CD8-positive, alpha-beta memory T cell (primary cell): ENCODE measurements at regions of chr15 and their contacts with region 1.

Region 1: GRCh38 chr15:39624806-39625205 is 43.9 kb downstream of the THBS1 start:
- DNase-seq: peak; percentile 17 to 91 (median 70)
- H3K4me3 ChIP-seq: no peak overlapping the region
- H3K4me3 Mint-ChIP-seq: peak overlapping the region; percentile 62 to 93 (median 87)
- H3K27ac ChIP-seq: peak overlapping the region; percentile 77
- H3K27ac Mint-ChIP-seq: peak overlapping the region; percentile 98 to 100 (median 100)
- H3K4me1 ChIP-seq: peaks cover 75% of the 10 kb centered on the region
- H3K4me1 Mint-ChIP-seq: peaks cover 86 to 91% (median 89%) of the 10 kb centered on the region in 3 donors
- H3K27me3 ChIP-seq: no peaks in the 10 kb centered on the region
- H3K27me3 Mint-ChIP-seq: peaks cover 0 to 2% of the 10 kb centered on the region in 2 donors

Region 2: DNA sequence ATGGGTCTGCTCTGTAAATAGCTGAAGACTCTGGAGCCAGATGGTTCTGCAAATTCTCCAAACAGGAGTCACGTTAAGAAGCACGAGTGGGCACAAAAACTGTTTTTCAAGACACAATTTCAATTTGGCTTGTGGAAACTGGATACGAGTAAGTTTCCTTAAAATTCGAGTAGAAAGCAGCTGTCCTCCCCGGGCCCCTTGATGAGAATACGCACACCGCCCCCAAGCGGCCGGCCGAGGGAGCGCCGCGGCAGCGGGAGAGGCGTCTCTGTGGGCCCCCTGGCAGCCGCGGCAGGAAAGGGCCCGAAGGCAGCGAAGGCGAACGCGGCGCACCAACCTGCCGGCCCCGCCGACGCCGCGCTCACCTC is 44.7 kb before region 1 on chr15:
- CTCF ChIA-PET with region 1: interaction called, 23 read pairs
- POLR2A ChIA-PET with region 1: no interaction called
- DNase-seq: peak; percentile 66 to 90 (median 86)
- H3K4me3 ChIP-seq: no peak overlapping the region
- H3K4me3 Mint-ChIP-seq: peak overlapping the region; percentile 63 to 89 (median 81)
- H3K27ac ChIP-seq: no peak overlapping the region
- H3K27ac Mint-ChIP-seq: peak overlapping the region in 4 of 8 donors; percentile 25 to 78 (median 30)
- H3K4me1 ChIP-seq: peaks cover 6% of the 10 kb centered on the region
- H3K4me1 Mint-ChIP-seq: peaks cover 18 to 41% (median 30%) of the 10 kb centered on the region in 3 donors
- H3K27me3 ChIP-seq: peaks cover 13% of the 10 kb centered on the region
- H3K27me3 Mint-ChIP-seq: peaks cover 12 to 56% of the 10 kb centered on the region in 2 donors

Region 3: GRCh38 chr15:39594056-39594763 is 30.6 kb before region 1 on chr15:
- CTCF ChIA-PET with region 1: interaction called, 38 read pairs
- POLR2A ChIA-PET with region 1: interaction called, 8 read pairs
- DNase-seq: peak in 4 of 5 donors; percentile 18 to 65 (median 32)
- H3K4me3 ChIP-seq: no peak overlapping the region
- H3K4me3 Mint-ChIP-seq: peak overlapping the region in 5 of 7 donors; percentile 19 to 70 (median 56)
- H3K27ac ChIP-seq: no peak overlapping the region
- H3K27ac Mint-ChIP-seq: peak overlapping the region in 7 of 8 donors; percentile 65 to 92 (median 86)
- H3K4me1 ChIP-seq: no peaks in the 10 kb centered on the region
- H3K4me1 Mint-ChIP-seq: peaks cover 7 to 8% (median 7%) of the 10 kb centered on the region in 3 donors
- H3K27me3 ChIP-seq: no peaks in the 10 kb centered on the region
- H3K27me3 Mint-ChIP-seq: no peaks in the 10 kb centered on the region

Region 4: DNA sequence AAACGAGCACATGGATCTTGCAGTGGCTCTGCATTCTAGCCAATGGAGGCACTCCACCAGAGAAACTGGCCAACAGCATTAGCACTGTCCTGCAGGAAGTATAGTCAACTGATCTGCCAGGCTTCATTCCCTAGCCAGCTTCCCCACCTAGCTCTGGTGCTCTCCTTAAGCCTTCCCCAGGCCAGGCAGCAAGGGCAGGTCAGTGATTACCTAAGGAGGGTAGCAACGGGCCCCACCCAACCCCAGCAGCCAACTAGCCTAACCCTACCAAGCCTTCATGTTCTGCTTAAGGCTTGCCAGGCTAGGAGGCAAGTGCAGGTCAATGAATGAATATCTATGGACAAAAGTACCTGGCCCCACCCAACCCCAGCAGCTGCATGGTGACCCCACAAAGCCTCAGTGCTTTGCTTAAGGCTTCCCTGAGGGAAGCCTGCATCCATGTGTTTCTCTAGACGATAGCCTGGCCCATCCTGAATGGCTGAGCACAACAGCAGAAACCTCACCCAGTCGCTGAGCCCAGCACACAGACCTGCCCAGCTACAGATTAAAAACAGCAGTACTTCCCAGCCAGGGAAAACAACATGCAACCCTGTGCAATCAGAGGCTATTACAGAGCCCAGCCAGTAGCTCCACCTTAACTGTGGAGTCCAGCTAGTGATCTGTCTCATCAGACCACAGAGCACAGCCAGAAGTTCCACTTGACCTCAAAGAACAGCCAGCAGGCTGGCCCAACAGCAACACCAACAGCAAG is 15.5 kb before region 1 on chr15:
- CTCF ChIA-PET with region 1: interaction called, 7 read pairs
- POLR2A ChIA-PET with region 1: interaction called, 13 read pairs
- DNase-seq: no peak
- H3K4me3 ChIP-seq: no peak overlapping the region
- H3K4me3 Mint-ChIP-seq: no peak overlapping the region
- H3K27ac ChIP-seq: no peak overlapping the region
- H3K27ac Mint-ChIP-seq: peak overlapping the region in 1 of 8 donors; percentile 38
- H3K4me1 ChIP-seq: no peaks in the 10 kb centered on the region
- H3K4me1 Mint-ChIP-seq: peaks cover 11 to 17% (median 12%) of the 10 kb centered on the region in 3 donors
- H3K27me3 ChIP-seq: no peaks in the 10 kb centered on the region
- H3K27me3 Mint-ChIP-seq: no peaks in the 10 kb centered on the region

Region 5: GRCh38 chr15:39642011-39642640 is 17.3 kb after region 1 on chr15:
- CTCF ChIA-PET with region 1: interaction called, 11 read pairs
- POLR2A ChIA-PET with region 1: interaction called, 7 read pairs
- DNase-seq: no peak
- H3K4me3 ChIP-seq: no peak overlapping the region
- H3K4me3 Mint-ChIP-seq: peak overlapping the region in 1 of 7 donors; percentile 7
- H3K27ac ChIP-seq: no peak overlapping the region
- H3K27ac Mint-ChIP-seq: peak overlapping the region in 6 of 8 donors; percentile 29 to 86 (median 52)
- H3K4me1 ChIP-seq: peaks cover 6% of the 10 kb centered on the region
- H3K4me1 Mint-ChIP-seq: peaks cover 37 to 64% (median 43%) of the 10 kb centered on the region in 3 donors
- H3K27me3 ChIP-seq: no peaks in the 10 kb centered on the region
- H3K27me3 Mint-ChIP-seq: no peaks in the 10 kb centered on the region

Region 6: GRCh38 chr15:39756806-39757522 is 132.2 kb after region 1 on chr15:
- CTCF ChIA-PET with region 1: interaction called, 20 read pairs
- POLR2A ChIA-PET with region 1: interaction called, 12 read pairs
- DNase-seq: peak in 3 of 5 donors; percentile 6 to 42 (median 32)
- H3K4me3 ChIP-seq: no peak overlapping the region
- H3K4me3 Mint-ChIP-seq: no peak overlapping the region
- H3K27ac ChIP-seq: no peak overlapping the region
- H3K27ac Mint-ChIP-seq: no peak overlapping the region
- H3K4me1 ChIP-seq: no peaks in the 10 kb centered on the region
- H3K4me1 Mint-ChIP-seq: peaks cover 0 to 11% (median 0%) of the 10 kb centered on the region in 3 donors
- H3K27me3 ChIP-seq: no peaks in the 10 kb centered on the region
- H3K27me3 Mint-ChIP-seq: peaks cover 0 to 3% of the 10 kb centered on the region in 2 donors